Activated CD4-positive, alpha-beta T cell treated with anti-CD3 and anti-CD28 coated beads for 36 hours (primary cell): ENCODE measurements at regions of chr3 and their contacts with region 1.

Region 1: GRCh38 chr3:14172496-14172895 is 5.9 kb downstream of the XPC start:
- DNase-seq: no peak
- ATAC-seq: no peak
- H3K4me3 Mint-ChIP-seq: no peak overlapping the region
- H3K27ac Mint-ChIP-seq: no peak overlapping the region
- H3K4me1 Mint-ChIP-seq: peaks cover 48% of the 10 kb centered on the region
- H3K27me3 Mint-ChIP-seq: no peaks in the 10 kb centered on the region

Region 2: GRCh38 chr3:14241716-14242115 is 69.2 kb after region 1 on chr3:
- CTCF ChIA-PET with region 1: no interaction called
- POLR2A ChIA-PET with region 1: interaction called, 10 read pairs
- intact Hi-C with region 1: no loop called
- DNase-seq: no peak
- ATAC-seq: no peak
- H3K4me3 Mint-ChIP-seq: no peak overlapping the region
- H3K27ac Mint-ChIP-seq: no peak overlapping the region
- H3K4me1 Mint-ChIP-seq: no peaks in the 10 kb centered on the region
- H3K27me3 Mint-ChIP-seq: no peaks in the 10 kb centered on the region